Activated CD4-positive, alpha-beta memory T cell treated with anti-CD3 and anti-CD28 coated beads, Interleukin-2, amount 10 ng/mL, durations not matched to agents 7 days and 5 days (primary cell): ENCODE measurements at regions of chr9 and their contacts with region 1.

Region 1: GRCh38 chr9:92293452-92294296 is at the start of gene IARS1:
- DNase-seq: peak; percentile 100
- H3K4me3 Mint-ChIP-seq: peak within 1 kb of the TSS; percentile 94
- H3K27ac Mint-ChIP-seq: peak within 1 kb of the TSS; percentile 99
- H3K4me1 Mint-ChIP-seq: peaks cover 72% of the 10 kb centered on the region
- H3K27me3 Mint-ChIP-seq: no peaks in the 10 kb centered on the region
- total RNA-seq, gene IARS1: 145 to 152 TPM

Region 2: GRCh38 chr9:91873637-91874051 is 420.0 kb before region 1 on chr9:
- CTCF ChIA-PET with region 1: no interaction called
- POLR2A ChIA-PET with region 1: no interaction called
- DNase-seq: no peak
- H3K4me3 Mint-ChIP-seq: no peak overlapping the region
- H3K27ac Mint-ChIP-seq: no peak overlapping the region
- H3K4me1 Mint-ChIP-seq: no peaks in the 10 kb centered on the region
- H3K27me3 Mint-ChIP-seq: peaks cover 38% of the 10 kb centered on the region

Region 3: GRCh38 chr9:92223758-92224157 is 69.9 kb before region 1 on chr9:
- CTCF ChIA-PET with region 1: no interaction called
- POLR2A ChIA-PET with region 1: no interaction called
- DNase-seq: no peak
- H3K4me3 Mint-ChIP-seq: no peak overlapping the region
- H3K27ac Mint-ChIP-seq: no peak overlapping the region
- H3K4me1 Mint-ChIP-seq: peaks cover 2% of the 10 kb centered on the region
- H3K27me3 Mint-ChIP-seq: no peaks in the 10 kb centered on the region

Region 4: DNA sequence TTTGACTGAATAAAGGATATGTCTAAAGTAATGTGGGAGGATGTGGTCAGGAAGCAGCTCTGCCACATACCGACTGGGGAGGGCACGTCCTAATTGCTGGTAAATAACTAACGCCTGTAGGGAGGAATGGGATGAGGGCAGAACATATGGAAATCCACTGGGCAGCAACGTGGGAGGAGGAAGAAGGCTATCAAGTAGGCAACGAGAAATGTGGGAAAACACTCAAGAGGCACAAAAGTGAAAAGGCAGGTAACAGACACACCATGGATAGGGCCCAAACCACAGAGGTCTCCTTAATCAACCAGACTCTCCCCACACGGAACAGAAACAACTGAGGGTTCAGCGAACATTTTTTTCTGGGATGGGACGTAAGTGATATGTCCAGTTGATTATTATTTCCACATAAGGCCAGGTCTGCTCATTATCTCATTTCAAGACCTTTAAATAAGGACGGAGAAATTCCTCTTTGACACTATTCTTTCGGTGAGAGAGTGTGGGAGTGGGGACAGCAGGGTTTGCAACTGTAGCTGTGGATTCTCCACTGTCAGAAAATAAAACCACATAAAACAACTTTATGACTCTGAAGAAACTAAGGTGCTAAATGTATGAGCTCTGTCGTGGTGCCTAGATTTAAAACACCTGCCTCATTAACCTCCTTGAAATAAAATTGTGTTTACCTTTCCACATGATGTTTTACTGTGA is 17.2 kb before region 1 on chr9:
- CTCF ChIA-PET with region 1: no interaction called
- POLR2A ChIA-PET with region 1: interaction called, 11 read pairs
- DNase-seq: peak; percentile 38
- H3K4me3 Mint-ChIP-seq: peak overlapping the region; percentile 38
- H3K27ac Mint-ChIP-seq: peak overlapping the region; percentile 78
- H3K4me1 Mint-ChIP-seq: peaks cover 47% of the 10 kb centered on the region
- H3K27me3 Mint-ChIP-seq: no peaks in the 10 kb centered on the region